ENCODE measurements at regions of chr13 and their contacts with region 1.

Region 1: GRCh38 chr13:98653463-98653985 is 76.6 kb upstream of the STK24 start:
- DNase-seq: peak; percentile 84
- ATAC-seq: peak; percentile 87
- H3K4me3 ChIP-seq: no peak overlapping the region
- H3K27ac ChIP-seq: no peak overlapping the region
- H3K4me1 ChIP-seq: peaks cover 18% of the 10 kb centered on the region
- H3K27me3 ChIP-seq: no peaks in the 10 kb centered on the region
- CTCF ChIP-seq: peak; percentile 77

Region 2: GRCh38 chr13:98445340-98446233 is 207.9 kb before region 1 on chr13:
- CTCF ChIA-PET with region 1: interaction called, 3 read pairs
- POLR2A ChIA-PET with region 1: no interaction called
- intact Hi-C with region 1: loop called (anchors 1 kb)
- DNase-seq: peak; percentile 72
- ATAC-seq: peak; percentile 79
- H3K4me3 ChIP-seq: no peak overlapping the region
- H3K27ac ChIP-seq: no peak overlapping the region
- H3K4me1 ChIP-seq: peaks cover 17% of the 10 kb centered on the region
- H3K27me3 ChIP-seq: no peaks in the 10 kb centered on the region
- CTCF ChIP-seq: peak; percentile 80

Region 3: DNA sequence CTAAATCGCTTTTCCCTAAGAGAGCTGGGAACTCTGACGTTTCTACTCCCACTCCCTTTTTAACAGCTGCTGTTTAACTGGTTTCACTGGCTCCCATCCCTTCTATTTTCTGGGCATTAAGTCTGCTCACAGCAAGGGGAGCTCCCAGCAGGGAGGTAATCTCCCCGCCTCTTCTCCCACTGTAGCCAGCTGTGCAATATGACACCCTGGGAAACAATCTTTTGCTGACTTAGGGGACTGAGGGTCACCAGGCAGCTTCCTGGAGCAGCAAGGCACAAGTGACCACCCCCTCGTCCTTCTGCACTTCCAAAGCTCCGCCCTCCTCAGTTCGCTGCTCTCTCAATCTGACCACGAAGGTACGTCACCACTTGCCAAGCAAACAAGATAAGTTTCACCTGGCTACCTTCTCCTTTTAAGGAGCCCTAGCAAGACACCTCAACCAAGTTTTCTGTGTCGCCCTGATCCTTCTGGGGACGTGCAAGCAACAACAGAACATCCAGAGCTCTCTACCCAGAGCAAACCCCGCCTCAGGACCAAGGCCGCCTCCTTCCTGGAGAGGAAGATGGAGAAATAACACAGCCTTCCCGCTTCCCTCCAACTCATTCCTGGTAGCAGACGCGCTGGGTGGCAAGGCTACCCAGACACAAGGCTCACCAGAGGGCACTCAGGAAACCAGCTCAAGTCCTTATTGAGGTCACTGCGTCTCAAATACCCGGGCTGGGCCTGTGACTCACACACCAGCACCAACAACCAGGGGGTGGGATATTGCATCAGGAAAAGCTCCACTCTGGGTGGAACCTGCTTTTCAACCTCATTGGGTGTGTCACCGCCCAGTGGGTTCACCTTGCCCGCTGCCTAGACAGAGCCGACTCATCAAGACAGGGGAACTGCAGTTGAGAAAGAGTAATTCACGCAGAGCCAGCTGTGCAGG is 169.0 kb before region 1 on chr13:
- CTCF ChIA-PET with region 1: interaction called, 4 read pairs
- POLR2A ChIA-PET with region 1: no interaction called
- intact Hi-C with region 1: loop called (anchors 10 kb)
- DNase-seq: peak; percentile 97
- ATAC-seq: peak; percentile 90
- H3K4me3 ChIP-seq: peak overlapping the region; percentile 57
- H3K27ac ChIP-seq: peak overlapping the region; percentile 99
- H3K4me1 ChIP-seq: peaks cover 37% of the 10 kb centered on the region
- H3K27me3 ChIP-seq: no peaks in the 10 kb centered on the region
- CTCF ChIP-seq: no peak

Region 4: GRCh38 chr13:98576963-98577822 is 76.3 kb before region 1 on chr13 and contains the start of gene STK24:
- CTCF ChIA-PET with region 1: interaction called, 3 read pairs
- POLR2A ChIA-PET with region 1: no interaction called
- intact Hi-C with region 1: loop called (anchors 2 kb)
- DNase-seq: peak; percentile 69
- ATAC-seq: peak; percentile 62
- H3K4me3 ChIP-seq: peak within 1 kb of the TSS; percentile 99
- H3K27ac ChIP-seq: peak within 1 kb of the TSS; percentile 55
- H3K4me1 ChIP-seq: peaks cover 30% of the 10 kb centered on the region
- H3K27me3 ChIP-seq: no peaks in the 10 kb centered on the region
- CTCF ChIP-seq: no peak
- total RNA-seq, gene STK24: 52.4 and 57.0 TPM in 2 replicates

Region 5: DNA sequence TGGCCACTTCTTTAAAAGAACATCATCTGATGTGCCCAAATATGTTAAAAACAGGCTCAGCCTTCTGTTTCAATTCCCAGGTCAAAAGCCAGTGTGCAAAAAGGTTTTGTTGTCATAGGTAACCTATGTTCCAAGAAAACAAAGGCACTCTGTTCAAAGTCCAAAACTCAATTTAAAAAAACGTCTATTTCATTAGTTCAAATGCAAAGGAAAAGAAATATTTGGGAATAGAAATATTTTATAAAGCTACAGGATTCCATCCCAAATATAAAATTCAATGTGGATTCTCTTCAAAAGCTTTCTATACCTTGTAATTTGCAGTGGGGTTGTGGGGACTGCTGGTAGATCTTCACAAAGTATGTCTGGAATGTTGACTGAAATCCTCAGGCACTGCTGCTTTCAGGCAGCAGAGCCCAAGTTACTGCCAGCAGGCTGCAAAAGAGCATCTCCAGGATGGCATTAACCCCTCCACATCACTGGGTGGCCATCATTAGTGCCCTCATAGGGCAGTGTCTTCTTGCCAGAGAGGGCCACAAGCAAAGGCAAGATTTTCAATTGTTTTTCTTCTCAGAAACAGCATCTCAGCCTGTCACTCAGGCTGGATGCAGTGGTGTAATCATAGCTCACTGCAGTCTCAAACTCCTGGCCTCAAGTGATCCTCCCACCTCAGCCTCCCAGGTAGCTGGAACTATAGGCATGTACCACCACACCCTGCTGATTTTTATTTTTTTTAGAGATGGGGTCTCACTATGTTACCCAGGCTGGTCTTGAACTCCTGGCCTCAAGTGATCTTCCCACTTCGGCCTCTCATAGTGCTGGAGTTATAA is 53.8 kb before region 1 on chr13:
- CTCF ChIA-PET with region 1: interaction called, 5 read pairs
- POLR2A ChIA-PET with region 1: no interaction called
- intact Hi-C with region 1: loop called (anchors 10 kb)
- DNase-seq: no peak
- ATAC-seq: no peak
- H3K4me3 ChIP-seq: no peak overlapping the region
- H3K27ac ChIP-seq: no peak overlapping the region
- H3K4me1 ChIP-seq: no peaks in the 10 kb centered on the region
- H3K27me3 ChIP-seq: no peaks in the 10 kb centered on the region
- CTCF ChIP-seq: no peak

Region 6: GRCh38 chr13:98664924-98665637 is 11.6 kb after region 1 on chr13:
- CTCF ChIA-PET with region 1: interaction called, 10 read pairs
- POLR2A ChIA-PET with region 1: no interaction called
- intact Hi-C with region 1: no loop called
- DNase-seq: peak; percentile 56
- ATAC-seq: no peak
- H3K4me3 ChIP-seq: no peak overlapping the region
- H3K27ac ChIP-seq: peak overlapping the region; percentile 48
- H3K4me1 ChIP-seq: peaks cover 23% of the 10 kb centered on the region
- H3K27me3 ChIP-seq: no peaks in the 10 kb centered on the region
- CTCF ChIP-seq: no peak